K562 (cell line): ENCODE measurements at regions of chr7 and their contacts with region 1.

Region 1: GRCh38 chr7:24665564-24666294 is 91.5 kb downstream of the GSDME start:
- DNase-seq: peak; percentile 48 to 66 (median 53)
- ATAC-seq: peak; percentile 88
- H3K4me3 ChIP-seq: no peak overlapping the region
- H3K27ac ChIP-seq: no peak overlapping the region
- H3K4me1 ChIP-seq: peaks cover 0 to 13% of the 10 kb centered on the region in 2 experiments; a peak in 2 of 5 replicates
- H3K27me3 ChIP-seq: no peaks in the 10 kb centered on the region
- CTCF ChIP-seq: peak; percentile 43 to 78 (median 69); a peak in 5 of 6 replicates
- EP300 ChIP-seq: no peak
- POLR2A ChIP-seq: no peak
- RAD21 ChIP-seq: peak; percentile 76 to 81

Region 2: DNA sequence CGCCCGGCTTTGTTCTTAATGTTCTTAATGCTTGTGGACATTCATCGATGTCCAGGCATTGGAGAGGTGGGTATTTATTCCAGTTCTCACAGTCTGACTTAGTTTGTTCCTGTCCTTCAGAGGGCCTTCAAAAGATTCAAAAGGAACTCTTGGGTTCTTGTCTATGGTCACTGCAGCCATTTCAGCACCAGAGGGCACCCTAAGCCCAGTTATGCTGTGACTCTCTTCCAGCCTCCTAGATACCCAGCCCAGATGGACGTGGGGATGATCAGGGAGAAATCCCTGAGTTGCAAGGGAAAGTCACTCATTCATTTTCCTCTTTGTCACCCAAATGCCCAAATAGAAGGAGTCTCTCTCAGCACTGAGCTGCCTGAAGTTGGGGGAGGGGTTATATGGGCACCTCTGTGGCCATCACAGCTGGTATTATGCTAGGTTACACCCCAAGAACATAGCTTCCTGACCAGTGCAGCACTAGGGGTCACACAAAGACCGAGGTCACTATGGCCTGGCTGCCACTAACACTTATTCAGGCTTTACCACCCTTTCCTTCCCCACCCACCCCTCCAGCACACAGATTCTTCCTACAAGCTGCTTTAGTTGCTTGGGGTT is 1095.0 kb before region 1 on chr7:
- CTCF ChIA-PET with region 1: interaction called, 6 read pairs
- POLR2A ChIA-PET with region 1: no interaction called
- in situ Hi-C with region 1: loop called (anchors 10 kb)
- intact Hi-C with region 1: no loop called
- DNase-seq: peak; percentile 62 to 86 (median 69)
- ATAC-seq: peak; percentile 98
- H3K4me3 ChIP-seq: no peak overlapping the region
- H3K27ac ChIP-seq: no peak overlapping the region
- H3K4me1 ChIP-seq: peaks cover 0 to 5% of the 10 kb centered on the region in 2 experiments; a peak in 2 of 5 replicates
- H3K27me3 ChIP-seq: no peaks in the 10 kb centered on the region
- CTCF ChIP-seq: peak; percentile 82 to 91 (median 87)
- EP300 ChIP-seq: no peak
- POLR2A ChIP-seq: no peak
- RAD21 ChIP-seq: peak; percentile 96 to 98

Region 3: DNA sequence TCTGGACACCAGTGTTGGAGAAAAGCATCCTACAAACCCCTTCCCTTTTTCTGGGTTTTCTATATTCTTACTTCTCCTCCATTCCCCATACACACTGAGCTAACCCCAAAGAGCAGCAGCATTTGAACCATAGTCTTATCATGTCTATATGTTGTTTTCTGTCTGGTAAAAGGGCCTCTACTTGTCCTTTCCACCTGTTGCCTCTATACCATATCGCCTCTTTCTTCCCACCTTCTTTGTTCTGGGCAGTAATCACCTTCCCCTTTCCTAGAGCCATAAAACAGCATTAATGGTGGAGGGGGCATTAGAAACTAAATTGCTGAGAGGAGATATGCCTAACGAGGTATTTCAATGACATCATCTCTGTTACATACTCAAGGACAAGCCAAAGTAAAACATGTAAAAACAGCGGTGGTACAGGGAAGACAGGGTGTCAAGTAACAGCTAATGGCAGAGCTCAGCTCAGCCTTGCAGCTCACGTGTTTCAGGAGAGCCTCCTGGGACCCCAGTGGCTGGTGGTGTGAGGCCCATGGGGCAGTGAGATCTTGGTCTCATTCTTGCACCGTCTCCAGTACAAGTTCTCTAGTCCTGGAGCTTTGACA is 361.1 kb before region 1 on chr7:
- CTCF ChIA-PET with region 1: no interaction called
- POLR2A ChIA-PET with region 1: no interaction called
- in situ Hi-C with region 1: loop called (anchors 10 kb)
- intact Hi-C with region 1: no loop called
- DNase-seq: no peak
- ATAC-seq: no peak
- H3K4me3 ChIP-seq: no peak overlapping the region
- H3K27ac ChIP-seq: no peak overlapping the region
- H3K4me1 ChIP-seq: no peaks in the 10 kb centered on the region
- H3K27me3 ChIP-seq: peaks cover 0 to 4% of the 10 kb centered on the region in 2 experiments; a peak in 1 of 5 replicates
- CTCF ChIP-seq: no peak
- EP300 ChIP-seq: no peak
- POLR2A ChIP-seq: no peak
- RAD21 ChIP-seq: no peak

Region 4: DNA sequence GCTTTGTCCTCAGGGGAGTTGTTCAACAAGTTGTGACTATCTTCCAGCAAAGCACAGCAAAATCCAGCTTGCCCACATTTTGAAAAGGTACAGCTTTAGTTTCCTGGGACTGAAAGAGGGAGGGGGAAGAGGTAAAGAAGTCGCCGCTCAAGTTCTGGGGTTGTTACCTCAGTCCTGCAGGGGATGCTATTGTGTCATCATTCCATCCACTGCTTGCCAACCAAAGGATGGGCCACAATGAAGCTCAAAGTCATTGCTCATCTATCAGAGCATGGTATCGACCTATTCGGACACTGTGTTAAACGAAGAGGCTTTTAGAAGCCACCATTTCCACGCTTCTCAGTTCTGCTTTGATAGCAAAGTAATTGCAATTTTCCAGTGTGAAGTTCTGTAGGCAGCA is 347.4 kb before region 1 on chr7:
- CTCF ChIA-PET with region 1: no interaction called
- POLR2A ChIA-PET with region 1: no interaction called
- in situ Hi-C with region 1: no loop called
- intact Hi-C with region 1: loop called (anchors 5 kb)
- DNase-seq: peak; percentile 21 to 38 (median 25)
- ATAC-seq: peak; percentile 78
- H3K4me3 ChIP-seq: no peak overlapping the region
- H3K27ac ChIP-seq: no peak overlapping the region
- H3K4me1 ChIP-seq: no peaks in the 10 kb centered on the region
- H3K27me3 ChIP-seq: peaks cover 0 to 7% of the 10 kb centered on the region in 2 experiments; a peak in 2 of 5 replicates
- CTCF ChIP-seq: peak; percentile 57 to 62 (median 61)
- EP300 ChIP-seq: no peak
- POLR2A ChIP-seq: no peak
- RAD21 ChIP-seq: peak; percentile 28 to 69; a peak in 3 of 4 replicates

Region 5: DNA sequence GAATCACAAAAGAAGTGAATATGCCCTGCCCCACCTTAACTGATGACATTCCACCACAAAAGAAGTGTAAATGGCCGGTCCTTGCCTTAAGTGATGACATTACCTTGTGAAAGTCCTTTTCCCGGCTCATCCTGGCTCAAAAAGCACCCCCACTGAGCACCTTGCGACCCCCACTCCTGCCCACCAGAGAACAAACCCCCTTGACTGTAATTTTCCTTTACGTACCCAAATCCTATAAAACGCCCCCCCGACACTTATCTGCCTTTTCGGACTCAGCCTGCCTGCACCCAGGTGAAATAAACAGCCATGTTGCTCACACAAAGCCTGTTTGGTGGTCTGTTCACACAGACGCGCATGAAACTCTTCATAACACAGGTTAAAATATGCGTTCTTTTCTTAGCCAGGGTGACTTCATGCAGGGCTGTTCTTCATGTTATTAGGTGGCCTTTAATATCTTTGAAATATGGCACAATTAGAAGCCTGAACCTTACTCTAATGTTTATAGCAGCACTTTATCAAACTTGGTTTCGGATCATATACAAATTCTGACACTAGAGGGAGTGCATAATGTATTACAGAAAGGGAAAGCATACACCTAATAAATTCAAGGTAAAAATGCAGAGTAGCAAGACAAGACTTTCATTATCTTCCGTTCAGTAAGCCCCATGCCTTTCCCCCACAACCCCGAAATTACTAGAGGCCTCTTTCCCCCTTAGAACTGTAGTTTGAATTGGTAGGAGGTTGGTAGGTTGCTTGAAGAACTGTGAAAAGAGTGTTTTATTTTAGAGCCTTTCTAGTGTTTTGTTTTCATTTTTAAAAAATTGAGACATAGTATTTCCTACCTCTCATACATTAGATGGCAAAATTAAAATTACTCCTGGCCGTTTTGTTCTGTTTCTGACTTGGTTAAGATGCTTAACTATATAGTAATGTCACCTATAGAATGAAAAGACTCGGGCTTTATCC is 263.8 kb before region 1 on chr7:
- CTCF ChIA-PET with region 1: interaction called, 4 read pairs
- POLR2A ChIA-PET with region 1: no interaction called
- in situ Hi-C with region 1: no loop called
- intact Hi-C with region 1: loop called (anchors 5 kb)
- DNase-seq: peak; percentile 8 to 15 (median 12)
- ATAC-seq: peak; percentile 63; the same call in 1 of the 3 replicates
- H3K4me3 ChIP-seq: no peak overlapping the region
- H3K27ac ChIP-seq: no peak overlapping the region
- H3K4me1 ChIP-seq: no peaks in the 10 kb centered on the region
- H3K27me3 ChIP-seq: peaks cover 0 to 2% of the 10 kb centered on the region in 2 experiments; a peak in 2 of 5 replicates
- CTCF ChIP-seq: peak; percentile 22 to 50 (median 37); a peak in 4 of 6 replicates
- EP300 ChIP-seq: no peak
- POLR2A ChIP-seq: no peak
- RAD21 ChIP-seq: peak in 1 of 2 experiments; percentile 52; a peak in 3 of 4 replicates

Region 6: GRCh38 chr7:24576171-24577025 is 89.3 kb before region 1 on chr7:
- CTCF ChIA-PET with region 1: interaction called, 6 read pairs
- POLR2A ChIA-PET with region 1: interaction called, 3 read pairs
- in situ Hi-C with region 1: no loop called
- intact Hi-C with region 1: loop called (anchors 1 kb)
- DNase-seq: peak; percentile 28 to 73 (median 48)
- ATAC-seq: peak; percentile 58
- H3K4me3 ChIP-seq: no peak overlapping the region
- H3K27ac ChIP-seq: no peak overlapping the region
- H3K4me1 ChIP-seq: peaks cover 11 to 23% of the 10 kb centered on the region in 2 experiments; a peak in 4 of 5 replicates
- H3K27me3 ChIP-seq: peaks cover 0 to 3% of the 10 kb centered on the region in 2 experiments; a peak in 1 of 5 replicates
- CTCF ChIP-seq: peak; percentile 55 to 75 (median 71)
- EP300 ChIP-seq: no peak
- POLR2A ChIP-seq: no peak
- RAD21 ChIP-seq: peak; percentile 39 to 66